Endothelial cell of umbilical vein (primary cell): ENCODE measurements at regions of chr17 and their contacts with region 1.

Region 1: GRCh38 chr17:511001-511698 is 158.5 kb upstream of the RPH3AL start:
- DNase-seq: no peak
- H3K4me3 ChIP-seq: no peak overlapping the region
- H3K27ac ChIP-seq: no peak overlapping the region
- H3K4me1 ChIP-seq: no peaks in the 10 kb centered on the region
- H3K27me3 ChIP-seq: peaks cover 0 to 2% of the 10 kb centered on the region in 2 experiments
- CTCF ChIP-seq: no peak
- POLR2A ChIP-seq: no peak

Region 2: GRCh38 chr17:497241-498034 is 13.7 kb before region 1 on chr17:
- CTCF ChIA-PET with region 1: no interaction called
- POLR2A ChIA-PET with region 1: no interaction called
- dilution Hi-C with region 1: no loop called
- intact Hi-C with region 1: no loop called
- DNase-seq: no peak
- H3K4me3 ChIP-seq: no peak overlapping the region
- H3K27ac ChIP-seq: no peak overlapping the region
- H3K4me1 ChIP-seq: no peaks in the 10 kb centered on the region
- H3K27me3 ChIP-seq: no peaks in the 10 kb centered on the region
- CTCF ChIP-seq: no peak
- POLR2A ChIP-seq: no peak

Region 3: GRCh38 chr17:565521-565920 is 54.4 kb after region 1 on chr17:
- CTCF ChIA-PET with region 1: no interaction called
- POLR2A ChIA-PET with region 1: interaction called, 14 read pairs
- dilution Hi-C with region 1: no loop called
- intact Hi-C with region 1: no loop called
- DNase-seq: no peak
- H3K4me3 ChIP-seq: no peak overlapping the region
- H3K27ac ChIP-seq: no peak overlapping the region
- H3K4me1 ChIP-seq: peaks cover 27% of the 10 kb centered on the region
- H3K27me3 ChIP-seq: no peaks in the 10 kb centered on the region
- CTCF ChIP-seq: peak; percentile 23 to 44
- POLR2A ChIP-seq: no peak

Region 4: DNA sequence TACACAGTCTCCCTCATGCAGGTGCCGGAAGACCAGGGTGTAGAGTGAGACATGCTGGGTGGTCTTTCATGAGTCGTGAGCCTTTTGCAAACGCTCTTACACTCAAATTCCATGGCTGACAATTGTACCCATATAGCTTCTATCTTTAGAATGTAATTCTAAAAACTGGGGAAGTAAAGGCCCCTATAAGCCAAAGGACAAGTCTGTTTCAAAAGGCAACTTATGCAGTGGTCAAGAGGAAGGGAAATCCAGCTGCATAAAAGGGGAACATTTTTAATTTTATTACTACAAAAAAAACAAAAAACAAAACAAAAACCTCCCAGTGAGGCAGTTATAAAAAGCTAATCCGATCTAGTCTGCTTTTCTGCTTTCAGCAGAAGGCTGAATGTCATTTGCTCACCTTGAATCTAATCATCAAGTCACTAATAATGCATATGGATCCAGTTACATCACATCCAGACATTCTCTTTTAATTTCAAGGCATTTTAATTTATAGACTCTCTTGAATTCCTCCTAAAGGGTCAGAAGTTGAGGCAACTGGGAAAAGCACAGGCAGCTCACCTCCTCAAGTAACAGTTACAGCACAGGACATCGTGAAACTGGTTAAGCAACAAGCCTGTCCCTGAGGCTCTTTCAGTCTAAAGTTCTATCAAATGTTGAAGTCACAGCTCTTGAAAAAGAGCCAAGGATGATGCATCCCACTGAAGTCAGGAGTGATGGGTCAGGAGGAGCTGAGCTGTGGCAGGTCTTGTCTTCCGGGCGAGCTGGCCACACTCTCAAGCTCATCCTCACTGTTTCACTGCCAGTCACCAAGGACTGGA is 103.7 kb after region 1 on chr17:
- CTCF ChIA-PET with region 1: no interaction called
- POLR2A ChIA-PET with region 1: no interaction called
- dilution Hi-C with region 1: no loop called
- intact Hi-C with region 1: no loop called
- DNase-seq: no peak
- H3K4me3 ChIP-seq: no peak overlapping the region
- H3K27ac ChIP-seq: no peak overlapping the region
- H3K4me1 ChIP-seq: no peaks in the 10 kb centered on the region
- H3K27me3 ChIP-seq: no peaks in the 10 kb centered on the region
- CTCF ChIP-seq: no peak
- POLR2A ChIP-seq: no peak

Region 5: GRCh38 chr17:688100-688989 is 177.2 kb after region 1 on chr17:
- CTCF ChIA-PET with region 1: interaction called, 3 read pairs
- POLR2A ChIA-PET with region 1: no interaction called
- dilution Hi-C with region 1: no loop called
- intact Hi-C with region 1: loop called (anchors 5 kb)
- DNase-seq: peak; percentile 34
- H3K4me3 ChIP-seq: no peak overlapping the region
- H3K27ac ChIP-seq: no peak overlapping the region
- H3K4me1 ChIP-seq: peaks cover 4% of the 10 kb centered on the region
- H3K27me3 ChIP-seq: no peaks in the 10 kb centered on the region
- CTCF ChIP-seq: peak in 1 of 2 donors; percentile 22
- POLR2A ChIP-seq: no peak